ENCODE measurements at regions of chr10 and their contacts with region 1.

Region 1: DNA sequence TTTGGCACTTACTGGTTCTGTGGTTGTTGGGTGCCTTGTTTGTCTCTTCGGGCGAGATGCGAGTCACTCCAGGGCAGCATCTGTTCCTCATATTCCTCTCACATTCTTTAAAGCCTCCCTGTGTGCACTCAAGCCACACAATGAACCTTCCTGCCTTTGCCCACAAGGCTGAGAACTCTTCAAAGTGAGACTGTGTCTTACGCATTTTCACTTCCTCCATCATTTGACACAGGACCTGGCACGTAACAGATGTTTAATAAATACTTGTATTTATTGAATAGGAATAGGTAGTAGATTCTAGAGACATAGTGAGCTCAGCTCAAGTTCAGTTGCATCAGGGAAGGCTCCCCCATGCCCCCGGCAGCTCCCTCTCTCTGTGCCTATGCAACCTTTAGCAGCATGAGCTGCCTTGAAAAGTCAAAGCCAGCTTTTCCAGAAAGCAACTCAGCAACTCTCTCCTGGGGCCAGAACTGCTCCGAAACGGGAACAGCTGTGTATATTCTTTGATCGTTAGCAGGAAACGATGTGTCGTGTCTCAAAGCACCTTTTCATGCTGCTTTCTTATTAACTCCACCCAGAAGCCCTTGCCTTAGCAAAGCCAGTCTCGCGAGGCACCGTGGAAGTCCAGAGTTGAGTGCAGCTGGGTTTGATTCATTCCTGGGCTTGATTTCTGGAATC is 97.5 kb downstream of the PFKFB3 start:
- DNase-seq: peak; percentile 37
- H3K4me3 Mint-ChIP-seq: peak overlapping the region; percentile 20
- H3K27ac Mint-ChIP-seq: peak overlapping the region; percentile 97
- H3K4me1 Mint-ChIP-seq: peaks cover 80% of the 10 kb centered on the region
- H3K27me3 Mint-ChIP-seq: no peaks in the 10 kb centered on the region
- CTCF ChIP-seq: no peak

Region 2: DNA sequence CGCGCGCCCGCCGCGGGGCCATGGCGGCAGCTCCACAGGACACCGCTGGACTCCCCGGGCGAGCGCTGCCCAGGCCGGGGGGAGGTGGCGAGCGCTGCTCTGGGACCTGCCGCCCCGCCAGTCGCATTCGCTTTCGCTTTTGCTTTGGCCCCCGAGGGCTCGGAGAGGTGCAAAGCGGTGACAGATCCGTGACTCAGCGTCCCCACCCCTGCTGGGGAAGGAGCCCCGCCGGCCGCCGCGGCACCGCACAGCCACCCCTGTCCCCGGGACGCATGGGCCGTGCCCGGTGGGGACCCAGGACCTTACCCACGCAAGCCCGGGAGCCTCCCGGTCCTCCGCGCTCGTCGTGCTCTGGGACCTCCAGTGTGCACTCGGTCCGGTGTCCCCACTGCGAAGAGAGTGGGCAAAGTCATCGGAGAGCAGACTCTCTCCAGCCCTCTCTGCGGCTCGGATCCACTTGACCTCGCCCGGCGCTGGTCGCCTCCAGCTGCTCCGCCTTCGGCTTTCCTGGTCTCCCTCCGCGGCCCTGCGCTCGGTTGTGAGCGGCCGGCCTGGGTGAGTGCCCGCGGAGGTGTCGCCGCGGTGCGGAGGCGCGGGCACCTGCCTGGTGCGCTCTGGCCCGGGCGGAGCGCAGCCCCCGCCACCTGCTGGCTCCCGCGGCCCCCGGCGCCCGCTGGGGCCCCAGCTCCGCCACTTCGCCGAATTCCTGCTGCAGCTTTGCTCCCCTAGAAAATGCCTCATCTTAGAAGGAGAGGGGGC is 322.6 kb before region 1 on chr10 and contains the start of gene IL15RA:
- CTCF ChIA-PET with region 1: no interaction called
- intact Hi-C with region 1: loop called (anchors 10 kb)
- DNase-seq: peak; percentile 92
- H3K4me3 Mint-ChIP-seq: peak within 1 kb of the TSS; percentile 84
- H3K27ac Mint-ChIP-seq: peak within 1 kb of the TSS; percentile 87
- H3K4me1 Mint-ChIP-seq: peaks cover 13% of the 10 kb centered on the region
- H3K27me3 Mint-ChIP-seq: no peaks in the 10 kb centered on the region
- CTCF ChIP-seq: no peak
- total RNA-seq, gene IL15RA: 28.6 and 42.4 TPM in 2 replicates

Region 3: GRCh38 chr10:6202684-6203330 is 97.4 kb before region 1 on chr10 and contains the start of gene PFKFB3:
- CTCF ChIA-PET with region 1: interaction called, 6 read pairs
- intact Hi-C with region 1: loop called (anchors 5 kb)
- DNase-seq: peak; percentile 99
- H3K4me3 Mint-ChIP-seq: peak within 1 kb of the TSS; percentile 84
- H3K27ac Mint-ChIP-seq: peak within 1 kb of the TSS; percentile 84
- H3K4me1 Mint-ChIP-seq: peaks cover 5% of the 10 kb centered on the region
- H3K27me3 Mint-ChIP-seq: no peaks in the 10 kb centered on the region
- CTCF ChIP-seq: peak; percentile 95
- total RNA-seq, gene PFKFB3: 273 and 293 TPM in 2 replicates

Region 4: DNA sequence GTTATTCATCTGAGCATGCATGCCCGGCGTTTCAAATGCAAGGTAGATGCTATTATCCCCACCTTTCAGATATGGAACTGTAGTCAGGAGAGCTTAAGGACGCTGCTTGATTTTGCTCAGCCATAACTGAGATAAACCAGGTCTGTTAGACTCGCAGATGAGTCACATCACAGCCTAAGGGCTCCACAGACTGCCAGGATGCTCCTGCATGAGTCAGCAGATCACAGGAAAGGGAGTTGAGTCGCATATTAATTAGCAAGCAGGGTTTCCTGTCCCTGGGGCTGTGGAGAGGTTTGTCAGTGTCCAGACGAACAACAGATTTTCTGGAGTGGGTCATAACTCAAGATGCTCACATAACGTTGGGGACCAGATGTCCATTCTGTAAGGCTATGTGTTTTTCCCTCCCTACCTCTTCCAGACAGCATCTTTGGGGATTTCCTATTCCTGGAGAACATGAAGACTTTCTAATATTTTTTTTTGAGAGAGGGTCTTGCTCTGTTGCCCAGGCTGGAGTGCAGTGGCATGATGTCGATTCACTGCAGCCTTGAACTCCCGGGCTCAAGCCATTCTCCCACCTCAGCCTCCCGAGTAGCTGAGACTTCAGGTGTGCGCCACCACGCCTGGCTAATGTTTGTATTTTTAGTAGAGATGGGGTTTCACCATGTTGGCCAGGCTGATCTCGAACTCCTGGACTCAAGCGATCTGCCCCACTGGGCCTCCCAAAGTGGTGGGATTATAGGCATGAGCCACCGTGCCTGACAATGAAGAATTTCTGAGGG is 60.8 kb before region 1 on chr10:
- CTCF ChIA-PET with region 1: no interaction called
- intact Hi-C with region 1: no loop called
- DNase-seq: peak; percentile 80
- H3K4me3 Mint-ChIP-seq: peak overlapping the region; percentile 17
- H3K27ac Mint-ChIP-seq: peak overlapping the region; percentile 89
- H3K4me1 Mint-ChIP-seq: peaks cover 20% of the 10 kb centered on the region
- H3K27me3 Mint-ChIP-seq: no peaks in the 10 kb centered on the region
- CTCF ChIP-seq: no peak

Region 5: GRCh38 chr10:6275022-6275997 is 24.9 kb before region 1 on chr10:
- CTCF ChIA-PET with region 1: interaction called, 4 read pairs
- intact Hi-C with region 1: loop called (anchors 1 kb)
- DNase-seq: peak; percentile 95
- H3K4me3 Mint-ChIP-seq: peak overlapping the region; percentile 65
- H3K27ac Mint-ChIP-seq: peak overlapping the region; percentile 99
- H3K4me1 Mint-ChIP-seq: peaks cover 58% of the 10 kb centered on the region
- H3K27me3 Mint-ChIP-seq: no peaks in the 10 kb centered on the region
- CTCF ChIP-seq: no peak

Region 6: DNA sequence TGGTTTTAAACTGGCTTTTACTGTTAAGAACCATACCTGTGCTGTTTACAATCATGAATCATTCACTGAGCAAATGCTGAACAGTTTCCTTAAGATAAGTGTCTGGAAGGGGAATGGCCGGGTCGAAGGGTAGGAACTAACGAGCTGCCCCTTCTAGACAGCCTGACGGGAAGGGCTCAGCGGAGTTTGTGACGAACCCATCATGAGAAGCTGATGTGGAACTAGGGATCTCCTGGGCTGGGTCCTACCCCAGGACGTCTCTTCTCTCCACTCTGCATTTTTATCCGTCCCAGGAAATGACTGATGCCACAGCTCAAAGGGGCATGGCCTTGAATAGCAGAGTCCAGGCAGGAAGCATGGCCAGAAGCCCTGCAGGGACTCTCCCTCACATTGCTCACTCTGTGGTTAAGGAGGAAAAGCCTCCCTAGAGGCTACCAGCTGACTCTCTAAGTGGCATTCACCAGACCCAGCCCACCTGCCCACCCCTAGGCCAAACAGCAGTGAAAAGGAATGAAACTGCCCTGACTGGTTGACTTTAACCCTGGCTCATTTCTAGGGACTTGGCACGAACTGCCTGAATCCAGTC is 14.5 kb after region 1 on chr10:
- CTCF ChIA-PET with region 1: interaction called, 9 read pairs
- intact Hi-C with region 1: loop called (anchors 2 kb)
- DNase-seq: peak; percentile 79
- H3K4me3 Mint-ChIP-seq: peak overlapping the region; percentile 66
- H3K27ac Mint-ChIP-seq: peak overlapping the region; percentile 95
- H3K4me1 Mint-ChIP-seq: peaks cover 59% of the 10 kb centered on the region
- H3K27me3 Mint-ChIP-seq: no peaks in the 10 kb centered on the region
- CTCF ChIP-seq: no peak

Measured in Calu3 (cell line).